Common myeloid progenitor, CD34-positive (primary cell): ENCODE measurements at regions of chr11 and their contacts with region 1.

Region 1: GRCh38 chr11:122822241-122822640 is 16.1 kb upstream of the CRTAM start:
- DNase-seq: peak in 1 of 3 donors; percentile 53
- H3K4me3 ChIP-seq: no peak overlapping the region
- H3K27ac ChIP-seq: no peak overlapping the region
- H3K4me1 ChIP-seq: peaks cover 10 to 25% (median 14%) of the 10 kb centered on the region in 4 experiments
- H3K27me3 ChIP-seq: no peaks in the 10 kb centered on the region

Region 2: GRCh38 chr11:122808478-122808869 is 13.8 kb before region 1 on chr11:
- CTCF ChIA-PET with region 1: interaction called, 11 read pairs
- POLR2A ChIA-PET with region 1: no interaction called
- DNase-seq: peak in 2 of 3 donors; percentile 44 to 49
- H3K4me3 ChIP-seq: peak overlapping the region in 3 of 7 experiments; percentile 12 to 55 (median 47)
- H3K27ac ChIP-seq: peak overlapping the region; percentile 4 to 58
- H3K4me1 ChIP-seq: peaks cover 10 to 40% (median 21%) of the 10 kb centered on the region in 4 experiments
- H3K27me3 ChIP-seq: no peaks in the 10 kb centered on the region